ENCODE measurements at regions of chr1 and their contacts with region 1.

Region 1: DNA sequence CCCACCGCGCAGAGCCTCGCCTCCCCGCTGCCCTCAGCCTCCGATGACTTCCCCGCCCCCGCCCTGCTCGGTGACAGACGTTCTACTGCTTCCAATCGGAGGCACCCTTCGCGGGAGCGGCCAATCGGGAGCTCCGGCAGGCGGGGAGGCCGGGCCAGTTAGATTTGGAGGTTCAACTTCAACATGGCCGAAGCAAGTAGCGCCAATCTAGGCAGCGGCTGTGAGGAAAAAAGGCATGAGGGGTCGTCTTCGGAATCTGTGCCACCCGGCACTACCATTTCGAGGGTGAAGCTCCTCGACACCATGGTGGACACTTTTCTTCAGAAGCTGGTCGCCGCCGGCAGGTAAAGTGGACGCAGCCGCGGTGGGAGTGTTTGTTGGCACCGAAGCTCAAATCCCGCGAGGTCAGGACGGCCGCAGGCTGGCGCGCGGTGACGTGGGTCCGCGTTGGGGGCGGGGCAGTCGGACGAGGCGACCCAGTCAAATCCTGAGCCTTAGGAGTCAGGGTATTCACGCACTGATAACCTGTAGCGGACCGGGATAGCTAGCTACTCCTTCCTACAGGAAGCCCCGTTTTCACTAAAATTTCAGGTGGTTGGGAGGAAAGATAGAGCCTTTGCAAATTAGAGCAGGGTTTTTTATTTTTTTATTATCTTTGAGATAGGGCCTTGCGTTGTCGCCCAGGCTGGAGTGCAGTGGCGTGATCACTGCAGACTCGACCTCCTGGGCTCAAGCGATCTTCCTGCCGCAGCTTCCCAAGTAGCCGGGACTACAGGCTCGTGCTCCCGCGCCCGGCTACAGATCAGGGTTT is at the start of gene PMF1:
- DNase-seq: peak; percentile 97
- ATAC-seq: peak; percentile 97
- H3K4me3 ChIP-seq: peak within 1 kb of the TSS; percentile 75 to 95 (median 81)
- H3K4me3 Mint-ChIP-seq: peak within 1 kb of the TSS; percentile 98
- H3K27ac ChIP-seq: peak within 1 kb of the TSS; percentile 93 to 94
- H3K27ac Mint-ChIP-seq: peak within 1 kb of the TSS; percentile 99
- H3K4me1 ChIP-seq: peaks cover 14 to 19% of the 10 kb centered on the region in 2 donors
- H3K4me1 Mint-ChIP-seq: peaks cover 29% of the 10 kb centered on the region
- H3K27me3 ChIP-seq: no peaks in the 10 kb centered on the region
- H3K27me3 Mint-ChIP-seq: no peaks in the 10 kb centered on the region
- CTCF ChIP-seq: no peak
- total RNA-seq, gene PMF1: 58.3 and 64.3 TPM in 2 replicates

Region 2: DNA sequence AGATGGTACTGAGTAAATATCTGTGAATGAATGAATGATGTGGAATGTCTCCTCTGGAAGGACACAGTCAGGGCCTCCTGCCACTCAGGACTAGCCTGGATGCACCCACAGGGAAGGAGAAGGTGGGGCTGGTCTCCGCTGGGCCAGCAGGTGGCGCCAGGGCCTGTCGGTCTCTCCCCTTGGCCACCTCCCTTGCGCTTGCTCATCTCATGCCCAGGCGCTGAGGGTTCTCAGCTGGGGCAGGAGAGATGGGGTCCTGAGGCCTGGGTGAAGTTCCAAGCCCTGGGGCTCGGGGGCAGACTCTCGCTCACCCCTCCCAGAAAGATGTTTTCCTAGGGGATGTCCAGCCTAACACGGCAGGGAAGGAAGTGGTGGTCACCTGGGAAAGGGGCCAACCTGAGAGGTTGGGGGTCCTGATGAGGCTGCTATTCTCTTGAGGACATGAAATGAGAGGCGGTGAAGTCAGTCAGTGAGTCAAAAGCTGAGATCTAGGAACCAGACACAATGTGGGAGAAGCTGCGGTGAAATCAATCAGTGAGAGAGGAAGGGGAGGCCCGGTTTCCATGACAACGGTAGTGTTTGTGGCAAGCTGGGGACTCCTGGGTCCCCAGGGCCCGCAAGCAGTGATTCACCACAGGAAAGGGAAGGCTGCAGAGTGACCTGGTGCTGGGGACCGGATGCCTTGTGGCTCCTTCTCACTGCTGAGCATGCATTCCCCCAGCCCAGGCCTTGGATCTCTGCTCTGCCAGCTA is 116.2 kb before region 1 on chr1:
- CTCF ChIA-PET with region 1: interaction called, 5 read pairs
- POLR2A ChIA-PET with region 1: no interaction called
- intact Hi-C with region 1: loop called (anchors 2 kb)
- DNase-seq: peak; percentile 97
- ATAC-seq: peak; percentile 87
- H3K4me3 ChIP-seq: peak overlapping the region in 3 of 5 experiments; percentile 3 to 47 (median 30)
- H3K4me3 Mint-ChIP-seq: peak overlapping the region; percentile 72
- H3K27ac ChIP-seq: peak overlapping the region; percentile 82 to 93
- H3K27ac Mint-ChIP-seq: peak overlapping the region; percentile 95
- H3K4me1 ChIP-seq: peaks cover 23 to 24% of the 10 kb centered on the region in 2 donors
- H3K4me1 Mint-ChIP-seq: peaks cover 31% of the 10 kb centered on the region
- H3K27me3 ChIP-seq: peaks cover 0 to 1% (median 0%) of the 10 kb centered on the region in 4 experiments
- H3K27me3 Mint-ChIP-seq: no peaks in the 10 kb centered on the region
- CTCF ChIP-seq: peak; percentile 95

Region 3: DNA sequence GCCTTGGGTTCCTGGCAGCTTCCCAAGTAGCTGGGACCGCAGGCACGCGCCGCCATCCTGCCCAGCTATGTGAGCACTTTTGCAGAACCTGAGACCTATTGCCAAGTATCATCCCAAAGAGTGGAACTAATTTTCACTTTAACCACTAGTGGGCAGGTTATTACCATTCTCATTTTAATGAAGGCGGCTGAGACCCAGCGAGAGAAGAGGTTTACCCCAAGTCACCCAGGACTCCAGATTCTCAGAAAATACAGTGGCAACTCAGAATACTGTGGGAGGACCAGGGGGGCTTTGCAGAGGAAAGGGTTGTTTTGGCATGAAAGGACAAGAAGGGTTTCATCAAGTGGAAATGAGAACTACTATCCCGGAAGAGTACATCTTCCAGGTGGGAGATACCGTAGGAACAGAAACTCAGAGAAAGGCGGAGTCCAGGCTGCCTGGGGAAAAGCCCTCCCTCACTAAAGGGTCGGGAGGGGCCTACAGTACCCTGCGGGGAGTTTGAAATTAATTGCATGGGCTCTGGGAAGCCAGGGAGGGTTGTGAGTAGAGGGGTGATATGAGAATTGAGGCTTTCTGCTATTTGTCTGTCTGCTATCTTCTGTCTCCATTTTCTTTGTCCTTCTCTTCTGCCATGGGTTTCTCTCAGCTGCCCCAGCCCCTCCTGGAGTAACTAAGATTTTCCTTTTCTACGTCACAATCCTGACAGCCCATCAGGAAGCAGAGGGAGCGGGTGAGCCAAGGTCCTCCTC is 66.8 kb before region 1 on chr1:
- CTCF ChIA-PET with region 1: interaction called, 381 read pairs
- POLR2A ChIA-PET with region 1: interaction called, 8 read pairs
- intact Hi-C with region 1: loop called (anchors 1 kb)
- DNase-seq: peak; percentile 83
- ATAC-seq: peak; percentile 66
- H3K4me3 ChIP-seq: peak overlapping the region in 1 of 5 experiments; percentile 15
- H3K4me3 Mint-ChIP-seq: peak overlapping the region; percentile 62
- H3K27ac ChIP-seq: no peak overlapping the region
- H3K27ac Mint-ChIP-seq: peak overlapping the region; percentile 42
- H3K4me1 ChIP-seq: peaks cover 50 to 54% of the 10 kb centered on the region in 2 donors
- H3K4me1 Mint-ChIP-seq: peaks cover 48% of the 10 kb centered on the region
- H3K27me3 ChIP-seq: peaks cover 0 to 10% (median 5%) of the 10 kb centered on the region in 4 experiments
- H3K27me3 Mint-ChIP-seq: peaks cover 8% of the 10 kb centered on the region
- CTCF ChIP-seq: peak; percentile 75

Region 4: GRCh38 chr1:156193488-156194299 is 19.3 kb before region 1 on chr1 and contains the start of gene SLC25A44:
- CTCF ChIA-PET with region 1: interaction called, 8 read pairs
- POLR2A ChIA-PET with region 1: interaction called, 8 read pairs
- intact Hi-C with region 1: loop called (anchors 1 kb)
- DNase-seq: peak; percentile 99
- ATAC-seq: peak; percentile 99
- H3K4me3 ChIP-seq: peak within 1 kb of the TSS; percentile 61 to 94 (median 84)
- H3K4me3 Mint-ChIP-seq: peak within 1 kb of the TSS; percentile 92
- H3K27ac ChIP-seq: peak within 1 kb of the TSS; percentile 80 to 86
- H3K27ac Mint-ChIP-seq: peak within 1 kb of the TSS; percentile 78
- H3K4me1 ChIP-seq: peaks cover 10 to 14% of the 10 kb centered on the region in 2 donors
- H3K4me1 Mint-ChIP-seq: peaks cover 36% of the 10 kb centered on the region
- H3K27me3 ChIP-seq: no peaks in the 10 kb centered on the region
- H3K27me3 Mint-ChIP-seq: no peaks in the 10 kb centered on the region
- CTCF ChIP-seq: peak; percentile 67
- total RNA-seq, gene SLC25A44: 26.6 and 27.2 TPM in 2 replicates

Region 5: DNA sequence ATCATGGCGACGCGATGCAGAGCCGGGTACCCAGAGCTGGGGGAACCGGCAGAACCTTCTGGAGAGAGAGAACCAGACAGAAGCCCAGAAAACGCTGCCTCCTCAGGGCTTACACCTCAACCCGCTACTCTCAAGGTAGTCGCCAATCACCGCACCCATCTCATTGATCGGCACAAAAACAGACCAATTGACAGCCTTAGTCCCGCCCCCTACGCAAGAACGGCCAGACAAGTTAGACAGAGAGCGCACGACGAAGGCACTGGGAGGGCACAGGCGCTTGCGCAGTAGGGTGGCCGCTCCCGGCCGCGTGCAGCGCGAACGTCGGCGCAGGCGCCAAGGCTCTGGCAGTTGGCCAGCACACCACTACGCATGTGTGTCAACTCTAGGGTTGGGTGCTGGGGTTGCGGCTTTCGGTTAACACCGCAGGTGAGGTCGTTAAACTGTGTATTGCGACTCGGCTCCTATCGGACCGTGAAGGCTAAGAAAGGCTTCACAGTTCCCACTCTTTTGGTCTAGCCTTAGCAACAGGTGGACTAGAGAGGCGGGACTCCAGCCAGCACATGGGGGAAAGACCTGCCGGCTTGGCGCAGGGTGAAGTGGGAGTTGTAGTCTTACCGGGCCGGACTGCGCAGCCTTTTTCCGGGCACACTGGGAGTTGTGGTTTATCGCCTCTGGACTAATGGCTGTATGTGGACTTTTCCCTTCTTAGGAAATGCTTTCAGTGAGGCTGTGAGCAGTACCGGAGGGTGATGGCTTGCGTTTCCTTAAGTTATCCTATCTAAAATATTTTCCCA is 125.3 kb after region 1 on chr1 and contains the starts of genes CCT3 and TSACC:
- CTCF ChIA-PET with region 1: no interaction called
- POLR2A ChIA-PET with region 1: interaction called, 3 read pairs
- intact Hi-C with region 1: loop called (anchors 1 kb)
- DNase-seq: peak; percentile 100
- ATAC-seq: peak; percentile 94
- H3K4me3 ChIP-seq: peak within 1 kb of the TSS; percentile 82 to 98 (median 87)
- H3K4me3 Mint-ChIP-seq: peak within 1 kb of the TSS; percentile 97
- H3K27ac ChIP-seq: peak within 1 kb of the TSS; percentile 70 to 74
- H3K27ac Mint-ChIP-seq: peak within 1 kb of the TSS; percentile 96
- H3K4me1 ChIP-seq: peaks cover 13 to 19% of the 10 kb centered on the region in 2 donors
- H3K4me1 Mint-ChIP-seq: peaks cover 35% of the 10 kb centered on the region
- H3K27me3 ChIP-seq: no peaks in the 10 kb centered on the region
- H3K27me3 Mint-ChIP-seq: no peaks in the 10 kb centered on the region
- CTCF ChIP-seq: no peak
- total RNA-seq, gene CCT3: 106 and 109 TPM in 2 replicates
- total RNA-seq, gene TSACC: 0.69 TPM in 1 of 2 replicates, not detected in the other

Measured in B cell (primary cell).